ENCODE measurements at regions of chr17 and their contacts with region 1.

Region 1: DNA sequence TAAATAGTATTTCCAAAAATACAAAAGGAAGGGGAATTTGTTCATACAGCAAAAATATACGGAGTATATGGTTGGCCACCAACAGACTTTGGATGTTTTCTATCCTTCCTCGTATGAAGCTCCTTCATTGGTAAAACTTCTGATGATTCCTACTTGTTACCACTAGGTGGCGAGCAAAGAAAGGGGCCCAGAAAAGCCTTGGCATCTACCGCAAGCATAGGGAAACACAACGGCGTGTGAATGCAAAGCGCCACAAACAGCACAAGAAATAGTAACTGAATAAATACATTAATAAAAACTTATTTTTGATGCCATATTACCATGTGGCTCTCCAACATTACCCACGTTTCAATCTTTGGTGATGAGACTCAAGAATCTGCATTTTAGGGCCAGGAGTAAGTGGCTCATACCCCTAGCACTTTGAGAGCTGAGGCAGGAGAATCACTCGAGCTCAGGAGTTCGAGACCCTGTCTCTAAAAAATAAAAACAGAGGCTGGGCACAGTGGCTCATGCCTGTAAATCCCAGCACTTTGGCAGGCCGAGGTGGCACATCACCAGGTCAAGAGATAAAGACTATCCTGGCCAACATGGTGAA is 34.5 kb downstream of the YWHAE start:
- DNase-seq: peak; percentile 73
- H3K4me3 Mint-ChIP-seq: peak overlapping the region; percentile 19
- H3K27ac Mint-ChIP-seq: no peak overlapping the region
- H3K4me1 Mint-ChIP-seq: peaks cover 66% of the 10 kb centered on the region
- H3K27me3 Mint-ChIP-seq: no peaks in the 10 kb centered on the region

Region 2: DNA sequence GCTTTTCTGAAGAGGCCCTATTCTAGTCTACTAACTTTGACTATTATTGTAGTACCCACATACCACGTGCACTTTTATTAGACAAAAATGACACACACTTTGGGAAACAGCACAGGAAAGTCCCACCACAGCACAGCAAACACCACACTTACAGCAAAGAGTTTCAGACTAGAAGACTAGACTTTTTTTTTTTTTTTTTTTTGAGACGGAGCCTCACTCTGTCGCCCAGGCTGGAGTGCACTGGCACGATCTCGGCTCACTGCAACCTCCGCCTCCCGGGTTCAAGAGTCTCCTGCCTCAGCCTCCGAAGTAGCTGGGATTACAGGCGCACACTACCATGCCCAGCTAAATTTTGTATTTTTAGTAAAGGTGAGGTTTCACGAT is 14.4 kb after region 1 on chr17:
- CTCF ChIA-PET with region 1: interaction called, 25 read pairs
- intact Hi-C with region 1: loop called (anchors 2 kb)
- DNase-seq: peak; percentile 72
- H3K4me3 Mint-ChIP-seq: peak overlapping the region; percentile 1
- H3K27ac Mint-ChIP-seq: peak overlapping the region; percentile 80
- H3K4me1 Mint-ChIP-seq: peaks cover 81% of the 10 kb centered on the region
- H3K27me3 Mint-ChIP-seq: no peaks in the 10 kb centered on the region

Region 3: GRCh38 chr17:1399679-1400512 is 34.4 kb after region 1 on chr17 and contains the start of gene YWHAE:
- CTCF ChIA-PET with region 1: interaction called, 13 read pairs
- intact Hi-C with region 1: loop called (anchors 1 kb)
- DNase-seq: peak; percentile 98
- H3K4me3 Mint-ChIP-seq: peak within 1 kb of the TSS; percentile 99
- H3K27ac Mint-ChIP-seq: peak within 1 kb of the TSS; percentile 100
- H3K4me1 Mint-ChIP-seq: peaks cover 32% of the 10 kb centered on the region
- H3K27me3 Mint-ChIP-seq: no peaks in the 10 kb centered on the region
- total RNA-seq, gene YWHAE: 528 to 576 TPM

Region 4: DNA sequence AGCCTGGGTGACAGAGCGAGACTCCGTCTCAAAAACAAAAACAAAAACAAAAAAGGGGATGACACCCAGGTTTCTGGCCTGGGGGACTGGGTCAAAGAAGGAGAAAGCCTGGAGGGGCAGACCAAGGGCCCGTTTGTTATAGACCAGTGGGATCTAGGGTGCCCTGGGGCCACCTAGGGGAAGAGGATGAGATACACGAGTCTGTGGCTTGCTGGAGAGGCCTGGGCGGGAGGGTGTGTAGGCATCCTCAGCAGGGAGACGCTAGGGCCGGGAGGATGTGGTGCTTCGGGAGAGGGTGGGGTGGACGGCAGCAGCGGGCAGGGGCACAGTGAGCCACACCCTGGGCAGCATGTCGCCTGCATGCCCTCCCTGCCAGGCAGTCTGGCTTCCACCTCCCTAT is 107.6 kb after region 1 on chr17:
- CTCF ChIA-PET with region 1: interaction called, 4 read pairs
- intact Hi-C with region 1: loop called (anchors 1 kb)
- DNase-seq: peak; percentile 55
- H3K4me3 Mint-ChIP-seq: no peak overlapping the region
- H3K27ac Mint-ChIP-seq: no peak overlapping the region
- H3K4me1 Mint-ChIP-seq: peaks cover 15% of the 10 kb centered on the region
- H3K27me3 Mint-ChIP-seq: no peaks in the 10 kb centered on the region

Region 5: GRCh38 chr17:1532836-1533602 is 167.5 kb after region 1 on chr17:
- CTCF ChIA-PET with region 1: interaction called, 10 read pairs
- intact Hi-C with region 1: no loop called
- DNase-seq: peak; percentile 65
- H3K4me3 Mint-ChIP-seq: no peak overlapping the region
- H3K27ac Mint-ChIP-seq: no peak overlapping the region
- H3K4me1 Mint-ChIP-seq: peaks cover 4% of the 10 kb centered on the region
- H3K27me3 Mint-ChIP-seq: no peaks in the 10 kb centered on the region

Measured in activated naive CD4-positive, alpha-beta T cell treated with anti-CD3 and anti-CD28 coated beads for 36 hours (primary cell).